CD8-positive, alpha-beta T cell (primary cell): ENCODE measurements at regions of chr1 and their contacts with region 1.

Region 1: GRCh38 chr1:25624156-25624555 is 7.6 kb downstream of the MAN1C1 start:
- DNase-seq: peak in 2 of 9 experiments; percentile 33 to 61
- ATAC-seq: no peak
- H3K4me3 ChIP-seq: no peak overlapping the region
- H3K4me3 Mint-ChIP-seq: peak overlapping the region; percentile 8
- H3K27ac ChIP-seq: peak overlapping the region in 1 of 2 experiments; percentile 9
- H3K27ac Mint-ChIP-seq: no peak overlapping the region
- H3K4me1 ChIP-seq: peaks cover 67% of the 10 kb centered on the region
- H3K4me1 Mint-ChIP-seq: peaks cover 87% of the 10 kb centered on the region
- H3K27me3 ChIP-seq: no peaks in the 10 kb centered on the region
- H3K27me3 Mint-ChIP-seq: no peaks in the 10 kb centered on the region
- CTCF ChIP-seq: no peak

Region 2: GRCh38 chr1:25658791-25659431 is 34.8 kb after region 1 on chr1:
- CTCF ChIA-PET with region 1: interaction called, 5 read pairs
- POLR2A ChIA-PET with region 1: no interaction called
- intact Hi-C with region 1: loop called in 1 of 2 experiments (anchors 5 kb)
- DNase-seq: peak in 2 of 9 experiments; percentile 2 to 44
- ATAC-seq: no peak
- H3K4me3 ChIP-seq: no peak overlapping the region
- H3K4me3 Mint-ChIP-seq: no peak overlapping the region
- H3K27ac ChIP-seq: no peak overlapping the region
- H3K27ac Mint-ChIP-seq: peak overlapping the region; percentile 43
- H3K4me1 ChIP-seq: peaks cover 23% of the 10 kb centered on the region
- H3K4me1 Mint-ChIP-seq: peaks cover 59% of the 10 kb centered on the region
- H3K27me3 ChIP-seq: no peaks in the 10 kb centered on the region
- H3K27me3 Mint-ChIP-seq: no peaks in the 10 kb centered on the region
- CTCF ChIP-seq: no peak

Region 3: GRCh38 chr1:25675729-25676476 is 51.7 kb after region 1 on chr1:
- CTCF ChIA-PET with region 1: interaction called, 7 read pairs
- POLR2A ChIA-PET with region 1: interaction called, 20 read pairs
- intact Hi-C with region 1: loop called in 1 of 2 experiments (anchors 2 kb)
- DNase-seq: peak; percentile 36 to 90 (median 74)
- ATAC-seq: peak; percentile 80
- H3K4me3 ChIP-seq: peak overlapping the region; percentile 14 to 41
- H3K4me3 Mint-ChIP-seq: peak overlapping the region; percentile 80
- H3K27ac ChIP-seq: peak overlapping the region; percentile 38 to 45
- H3K27ac Mint-ChIP-seq: peak overlapping the region; percentile 94
- H3K4me1 ChIP-seq: peaks cover 71% of the 10 kb centered on the region
- H3K4me1 Mint-ChIP-seq: peaks cover 88% of the 10 kb centered on the region
- H3K27me3 ChIP-seq: no peaks in the 10 kb centered on the region
- H3K27me3 Mint-ChIP-seq: no peaks in the 10 kb centered on the region
- CTCF ChIP-seq: no peak